ENCODE measurements at regions of chr3 and their contacts with region 1.

Region 1: GRCh38 chr3:98602078-98602678 is 8.8 kb upstream of the CPOX start:
- DNase-seq: peak; percentile 48
- H3K4me3 ChIP-seq: no peak overlapping the region
- H3K27ac ChIP-seq: no peak overlapping the region
- H3K4me1 ChIP-seq: no peaks in the 10 kb centered on the region
- H3K27me3 ChIP-seq: no peaks in the 10 kb centered on the region
- CTCF ChIP-seq: peak; percentile 82 to 83

Region 2: GRCh38 chr3:98705706-98706105 is 103.5 kb after region 1 on chr3:
- CTCF ChIA-PET with region 1: interaction called, 4 read pairs
- dilution Hi-C with region 1: no loop called
- in situ Hi-C with region 1: loop called in 1 of 2 experiments (anchors 10 kb)
- intact Hi-C with region 1: loop called (anchors 1 kb)
- DNase-seq: no peak
- H3K4me3 ChIP-seq: no peak overlapping the region
- H3K27ac ChIP-seq: no peak overlapping the region
- H3K4me1 ChIP-seq: no peaks in the 10 kb centered on the region
- H3K27me3 ChIP-seq: no peaks in the 10 kb centered on the region
- CTCF ChIP-seq: peak; percentile 28 to 59

Region 3: GRCh38 chr3:98801043-98801747 is 199.0 kb after region 1 on chr3:
- CTCF ChIA-PET with region 1: interaction called, 13 read pairs
- dilution Hi-C with region 1: loop called (anchors 5 kb)
- in situ Hi-C with region 1: no loop called
- intact Hi-C with region 1: no loop called
- DNase-seq: no peak
- H3K4me3 ChIP-seq: no peak overlapping the region
- H3K27ac ChIP-seq: no peak overlapping the region
- H3K4me1 ChIP-seq: peaks cover 30% of the 10 kb centered on the region
- H3K27me3 ChIP-seq: no peaks in the 10 kb centered on the region
- CTCF ChIP-seq: peak; percentile 10 to 21

Region 4: GRCh38 chr3:98817547-98818041 is 215.4 kb after region 1 on chr3:
- CTCF ChIA-PET with region 1: no interaction called
- dilution Hi-C with region 1: no loop called
- in situ Hi-C with region 1: loop called (anchors 5 kb)
- intact Hi-C with region 1: loop called (anchors 1 kb)
- DNase-seq: no peak
- H3K4me3 ChIP-seq: no peak overlapping the region
- H3K27ac ChIP-seq: no peak overlapping the region
- H3K4me1 ChIP-seq: peaks cover 3% of the 10 kb centered on the region
- H3K27me3 ChIP-seq: no peaks in the 10 kb centered on the region
- CTCF ChIP-seq: peak; percentile 57 to 69

Measured in mammary epithelial cell (primary cell).